Psoas muscle (tissue), 8 donors: ENCODE measurements at regions of chr12 and their contacts with region 1.

Region 1: GRCh38 chr12:131928711-131929580 is at the start of gene PUS1:
- DNase-seq: peak; percentile 95 to 98
- ATAC-seq: peak; percentile 93 to 94 (median 94)
- H3K4me3 ChIP-seq: peak within 1 kb of the TSS; percentile 92
- H3K27ac ChIP-seq: peak within 1 kb of the TSS; percentile 88
- H3K4me1 ChIP-seq: peaks cover 13% of the 10 kb centered on the region
- H3K27me3 ChIP-seq: no peaks in the 10 kb centered on the region
- CTCF ChIP-seq: no peak
- total RNA-seq, gene PUS1: 11.7 to 21.4 (median 18.7) TPM

Region 2: DNA sequence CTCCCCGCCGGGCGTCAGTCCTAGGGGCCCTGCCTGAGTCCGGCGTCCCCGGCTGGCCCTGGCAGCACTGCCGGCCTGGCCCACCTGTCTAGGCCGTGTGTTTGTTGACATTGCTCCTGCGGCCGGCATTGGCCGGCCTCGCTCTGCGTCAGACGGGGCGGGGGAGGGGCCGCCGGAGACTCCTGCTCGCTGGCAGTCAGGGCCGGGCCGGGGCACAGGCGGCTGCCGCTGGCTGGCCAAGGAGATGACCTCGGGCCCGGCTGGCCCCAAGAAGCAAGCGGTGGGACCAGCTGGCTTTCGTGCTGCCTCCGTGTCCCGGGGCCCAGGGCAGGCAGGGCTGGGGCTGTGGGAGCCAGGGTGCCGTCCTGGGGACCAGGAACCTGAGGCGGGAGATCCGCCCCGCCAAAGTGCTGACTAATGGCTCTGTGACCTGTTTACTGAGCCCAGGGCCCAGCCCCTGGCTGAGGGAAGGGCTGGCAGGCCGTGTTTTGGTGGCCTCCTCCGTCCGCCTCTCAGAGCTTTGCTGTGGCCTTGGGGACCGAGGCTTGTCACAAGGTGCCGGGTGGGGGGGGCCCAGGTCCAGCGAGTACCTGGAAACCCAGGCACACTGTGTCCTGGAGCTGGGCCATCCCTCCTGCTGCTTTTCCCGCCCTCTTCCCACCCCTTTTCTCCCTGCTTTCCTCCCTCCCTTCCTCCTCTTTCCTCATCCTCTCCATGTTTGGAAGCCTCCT is 32.7 kb before region 1 on chr12:
- intact Hi-C with region 1: loop called in 1 of 2 experiments (anchors 2 kb)
- DNase-seq: peak; percentile 94 to 97
- ATAC-seq: peak; percentile 85 to 87 (median 86)
- H3K4me3 ChIP-seq: peak overlapping the region; percentile 78
- H3K27ac ChIP-seq: peak overlapping the region; percentile 98
- H3K4me1 ChIP-seq: peaks cover 43% of the 10 kb centered on the region
- H3K27me3 ChIP-seq: no peaks in the 10 kb centered on the region
- CTCF ChIP-seq: no peak

Region 3: DNA sequence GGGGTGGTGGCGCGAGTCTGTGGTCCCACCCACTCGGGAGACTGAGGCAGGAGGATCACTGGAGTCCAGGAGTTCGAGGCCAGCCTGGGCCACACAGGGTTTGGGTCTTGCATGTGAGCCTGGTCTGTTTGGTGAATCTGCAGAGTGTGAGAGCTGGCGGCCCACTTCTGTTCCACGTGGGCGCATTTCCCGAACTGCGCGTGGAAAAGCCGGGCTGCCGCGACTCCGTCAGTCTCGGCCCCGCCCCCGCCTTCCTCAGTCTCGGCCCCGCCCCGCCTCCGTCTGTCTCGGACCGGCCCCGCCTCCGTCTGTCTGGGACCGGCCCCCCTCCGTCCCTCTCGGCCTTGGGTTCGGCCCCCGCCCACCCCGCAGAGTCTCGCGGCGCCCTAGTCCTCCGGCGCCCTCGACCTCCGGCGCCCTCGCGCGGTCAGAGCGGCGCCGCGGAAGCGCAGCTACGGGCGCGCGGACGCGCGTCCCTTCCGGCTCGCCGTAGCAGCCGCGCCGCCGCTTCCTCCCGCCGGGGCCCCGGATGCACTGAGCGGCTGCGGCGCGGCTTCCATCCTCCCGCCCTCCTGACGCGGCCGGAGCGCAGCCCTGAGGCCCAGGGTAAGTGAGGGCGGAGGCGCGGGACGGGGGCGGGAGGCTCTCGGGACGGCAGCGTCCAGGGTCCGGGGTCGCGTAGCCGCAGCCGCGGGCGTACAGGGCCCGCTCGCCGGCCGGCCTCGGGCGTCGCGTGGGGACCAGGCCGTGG is 20.7 kb after region 1 on chr12 and contains the start of gene EP400:
- intact Hi-C with region 1: loop called in 1 of 2 experiments (anchors 2 kb)
- DNase-seq: peak; percentile 98
- ATAC-seq: peak; percentile 96 to 97 (median 97)
- H3K4me3 ChIP-seq: peak within 1 kb of the TSS; percentile 96
- H3K27ac ChIP-seq: peak within 1 kb of the TSS; percentile 71
- H3K4me1 ChIP-seq: peaks cover 21% of the 10 kb centered on the region
- H3K27me3 ChIP-seq: no peaks in the 10 kb centered on the region
- CTCF ChIP-seq: peak; percentile 42
- total RNA-seq, gene EP400: 18.4 to 24.5 (median 22.9) TPM